AG04450 (cell line): ENCODE measurements at regions of chr3 and their contacts with region 1.

Region 1: GRCh38 chr3:12822725-12823373 is 18.5 kb downstream of the RPL32 start:
- DNase-seq: no peak
- H3K4me3 ChIP-seq: no peak overlapping the region
- H3K27ac ChIP-seq: no peak overlapping the region
- H3K27me3 ChIP-seq: no peaks in the 10 kb centered on the region
- CTCF ChIP-seq: peak; percentile 37

Region 2: DNA sequence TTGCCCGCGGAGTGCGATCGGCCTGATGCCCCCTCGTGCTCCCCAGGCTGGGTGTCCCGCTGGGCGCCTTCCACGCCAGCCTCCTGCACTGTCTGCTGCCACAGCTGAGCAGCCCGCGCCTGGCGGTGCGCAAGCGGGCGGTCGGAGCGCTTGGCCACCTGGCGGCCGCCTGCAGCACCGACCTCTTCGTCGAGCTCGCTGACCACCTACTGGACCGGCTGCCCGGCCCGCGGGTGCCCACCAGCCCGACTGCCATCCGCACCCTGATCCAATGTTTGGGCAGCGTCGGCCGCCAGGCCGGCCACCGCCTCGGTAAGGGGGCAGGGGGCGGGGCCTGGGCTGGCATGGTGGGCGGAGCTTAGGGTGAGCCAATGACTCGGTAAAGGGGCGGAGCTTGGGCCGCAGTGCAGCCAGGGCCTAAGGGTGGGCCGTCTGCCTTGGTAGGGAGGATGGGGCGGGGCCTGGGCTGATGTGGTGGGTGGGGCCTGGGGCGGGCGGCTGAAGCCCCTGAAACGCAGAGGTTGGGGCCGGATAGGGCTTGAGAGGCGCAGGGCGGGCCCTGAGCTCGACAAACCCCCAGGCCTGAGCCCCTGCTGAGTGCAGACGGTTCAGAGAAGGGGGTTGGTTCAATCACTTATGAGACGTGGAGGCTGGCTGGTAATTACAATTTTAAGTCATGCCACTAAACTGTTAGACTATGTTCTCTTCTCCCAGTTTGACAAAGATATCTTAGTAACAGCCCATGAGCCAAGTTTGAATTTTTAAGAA is 12.7 kb before region 1 on chr3:
- CTCF ChIA-PET with region 1: interaction called, 10 read pairs
- POLR2A ChIA-PET with region 1: interaction called, 3 read pairs
- DNase-seq: peak; percentile 66
- H3K4me3 ChIP-seq: peak overlapping the region; percentile 59
- H3K27ac ChIP-seq: no peak overlapping the region
- H3K27me3 ChIP-seq: no peaks in the 10 kb centered on the region
- CTCF ChIP-seq: peak; percentile 76

Region 3: DNA sequence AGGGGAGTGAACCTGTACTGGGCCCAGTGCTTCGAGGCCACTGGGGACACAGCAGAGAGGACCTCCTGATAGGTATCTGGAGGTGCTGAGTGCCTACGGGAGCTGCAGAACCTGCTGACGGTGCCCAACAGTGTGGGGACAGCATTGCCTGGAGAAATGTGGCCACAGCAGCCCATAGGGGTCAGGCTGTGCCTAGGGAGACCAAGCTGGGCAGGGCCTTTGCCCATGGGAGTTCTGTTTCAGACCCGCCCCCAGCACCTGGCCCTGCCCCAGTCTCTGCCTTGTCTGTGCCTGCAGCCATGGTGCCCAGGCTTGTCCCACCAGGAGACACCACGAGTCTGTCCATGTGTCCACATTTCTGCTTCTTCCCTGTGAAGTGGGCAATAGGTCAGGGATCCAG is 33.8 kb after region 1 on chr3:
- CTCF ChIA-PET with region 1: no interaction called
- POLR2A ChIA-PET with region 1: no interaction called
- DNase-seq: no peak
- H3K4me3 ChIP-seq: no peak overlapping the region
- H3K27ac ChIP-seq: no peak overlapping the region
- H3K27me3 ChIP-seq: peaks cover 54% of the 10 kb centered on the region
- CTCF ChIP-seq: no peak